A549 (cell line): ENCODE measurements at regions of chr3 and their contacts with region 1.

Region 1: GRCh38 chr3:150348500-150348899 is 59.6 kb upstream of the TSC22D2 start:
- DNase-seq: peak; percentile 81 to 85
- ATAC-seq: peak; percentile 81 to 84
- H3K4me3 ChIP-seq: no peak overlapping the region
- H3K27ac ChIP-seq: peak overlapping the region; percentile 72 to 82
- H3K4me1 ChIP-seq: peaks cover 69% of the 10 kb centered on the region
- CTCF ChIP-seq: no peak
- EP300 ChIP-seq: peak; percentile 55 to 74; a peak in 2 of 5 replicates
- POLR2A ChIP-seq: no peak
- RAD21 ChIP-seq: peak in 1 of 2 experiments; percentile 35; a peak in 3 of 5 replicates

Region 2: DNA sequence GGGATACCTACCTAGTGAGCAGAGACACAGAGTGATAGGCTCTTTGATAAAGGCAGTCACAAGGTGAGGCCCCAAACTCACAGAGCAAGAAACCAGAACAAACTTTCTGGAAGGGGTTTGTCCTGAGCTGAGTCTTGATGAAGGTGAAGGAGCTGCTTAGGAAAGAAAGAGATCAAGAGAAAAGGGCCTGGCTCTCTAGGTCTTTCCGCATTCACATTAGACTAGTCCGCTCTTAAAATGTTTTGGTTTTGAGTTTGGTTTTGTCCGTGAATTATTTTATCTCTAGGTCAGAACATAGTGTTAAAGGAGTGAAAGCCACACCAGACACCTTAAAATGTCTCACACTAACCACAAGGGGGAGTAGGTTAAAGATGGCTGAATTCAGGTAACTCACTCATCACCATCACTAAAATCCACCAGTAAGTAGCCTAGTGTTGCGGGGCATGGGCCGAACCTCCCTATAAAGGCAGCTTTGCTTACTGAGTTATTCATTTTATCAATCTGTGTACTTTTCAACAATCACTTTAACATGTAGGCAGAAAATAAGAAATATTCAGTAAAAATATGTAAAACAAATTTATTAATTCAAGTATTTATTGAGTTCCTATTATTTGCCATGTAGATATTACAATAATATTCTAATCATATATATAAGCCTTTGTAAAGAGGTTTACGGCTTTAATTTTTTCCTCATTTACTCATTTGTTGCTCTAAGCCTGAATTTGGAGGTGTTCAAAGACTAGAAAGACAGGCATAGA is 61.9 kb before region 1 on chr3:
- CTCF ChIA-PET with region 1: interaction called, 20 read pairs
- POLR2A ChIA-PET with region 1: no interaction called
- DNase-seq: peak; percentile 47 to 75
- ATAC-seq: peak; percentile 96; a peak in 5 of 6 replicates
- H3K4me3 ChIP-seq: no peak overlapping the region
- H3K27ac ChIP-seq: peak overlapping the region; percentile 17 to 42; a peak in 5 of 6 replicates
- H3K4me1 ChIP-seq: no peaks in the 10 kb centered on the region
- CTCF ChIP-seq: peak; percentile 76
- EP300 ChIP-seq: no peak
- POLR2A ChIP-seq: no peak
- RAD21 ChIP-seq: peak; percentile 72 to 77